Endothelial cell of umbilical vein (primary cell): ENCODE measurements at regions of chr3 and their contacts with region 1.

Region 1: GRCh38 chr3:194738254-194739093 is 52.8 kb downstream of the FAM43A start:
- DNase-seq: peak; percentile 76
- H3K4me3 ChIP-seq: no peak overlapping the region
- H3K27ac ChIP-seq: peak overlapping the region; percentile 76
- H3K4me1 ChIP-seq: peaks cover 44% of the 10 kb centered on the region
- H3K27me3 ChIP-seq: no peaks in the 10 kb centered on the region
- CTCF ChIP-seq: no peak
- POLR2A ChIP-seq: no peak

Region 2: GRCh38 chr3:194691481-194692283 is 46.8 kb before region 1 on chr3:
- CTCF ChIA-PET with region 1: interaction called, 5 read pairs
- POLR2A ChIA-PET with region 1: interaction called, 3 read pairs
- dilution Hi-C with region 1: no loop called
- intact Hi-C with region 1: loop called (anchors 1 kb)
- DNase-seq: peak; percentile 68
- H3K4me3 ChIP-seq: no peak overlapping the region
- H3K27ac ChIP-seq: peak overlapping the region; percentile 39
- H3K4me1 ChIP-seq: peaks cover 19% of the 10 kb centered on the region
- H3K27me3 ChIP-seq: no peaks in the 10 kb centered on the region
- CTCF ChIP-seq: no peak
- POLR2A ChIP-seq: peak; percentile 76

Region 3: GRCh38 chr3:194769020-194769643 is 30.7 kb after region 1 on chr3:
- CTCF ChIA-PET with region 1: no interaction called
- POLR2A ChIA-PET with region 1: no interaction called
- dilution Hi-C with region 1: no loop called
- intact Hi-C with region 1: loop called (anchors 1 kb)
- DNase-seq: peak; percentile 99
- H3K4me3 ChIP-seq: peak overlapping the region in 1 of 3 experiments; percentile 25
- H3K27ac ChIP-seq: no peak overlapping the region
- H3K4me1 ChIP-seq: peaks cover 24% of the 10 kb centered on the region
- H3K27me3 ChIP-seq: no peaks in the 10 kb centered on the region
- CTCF ChIP-seq: no peak
- POLR2A ChIP-seq: peak; percentile 64

Region 4: GRCh38 chr3:194871143-194871863 is 132.8 kb after region 1 on chr3:
- CTCF ChIA-PET with region 1: interaction called, 4 read pairs
- POLR2A ChIA-PET with region 1: no interaction called
- dilution Hi-C with region 1: no loop called
- intact Hi-C with region 1: loop called (anchors 2 kb)
- DNase-seq: peak; percentile 71
- H3K4me3 ChIP-seq: no peak overlapping the region
- H3K27ac ChIP-seq: peak overlapping the region; percentile 73
- H3K4me1 ChIP-seq: peaks cover 50% of the 10 kb centered on the region
- H3K27me3 ChIP-seq: no peaks in the 10 kb centered on the region
- CTCF ChIP-seq: no peak
- POLR2A ChIP-seq: no peak

Region 5: GRCh38 chr3:195106418-195106906 is 368.0 kb after region 1 on chr3:
- CTCF ChIA-PET with region 1: interaction called, 5 read pairs
- POLR2A ChIA-PET with region 1: no interaction called
- dilution Hi-C with region 1: no loop called
- intact Hi-C with region 1: loop called (anchors 1 kb)
- DNase-seq: peak; percentile 76
- H3K4me3 ChIP-seq: no peak overlapping the region
- H3K27ac ChIP-seq: peak overlapping the region; percentile 96
- H3K4me1 ChIP-seq: peaks cover 44% of the 10 kb centered on the region
- H3K27me3 ChIP-seq: no peaks in the 10 kb centered on the region
- CTCF ChIP-seq: peak; percentile 97 to 98
- POLR2A ChIP-seq: no peak